SK-N-SH (cell line): ENCODE measurements at regions of chr17 and their contacts with region 1.

Region 1: GRCh38 chr17:58112970-58113631 is 29.9 kb downstream of the DYNLL2 start:
- DNase-seq: peak; percentile 79
- H3K4me3 ChIP-seq: no peak overlapping the region
- H3K27ac ChIP-seq: no peak overlapping the region
- H3K4me1 ChIP-seq: no peaks in the 10 kb centered on the region
- H3K27me3 ChIP-seq: 0 out of 2 replicates have a peak, but pooled peaks cover 18% of the 10 kb centered on the region
- CTCF ChIP-seq: peak; percentile 99
- EP300 ChIP-seq: no peak
- RAD21 ChIP-seq: peak; percentile 99

Region 2: GRCh38 chr17:57849874-57850754 is 263.0 kb before region 1 on chr17 and contains the start of gene MRPS23:
- CTCF ChIA-PET with region 1: interaction called, 118 read pairs
- POLR2A ChIA-PET with region 1: no interaction called
- DNase-seq: peak; percentile 98
- H3K4me3 ChIP-seq: peak within 1 kb of the TSS; percentile 92 to 98
- H3K27ac ChIP-seq: peak within 1 kb of the TSS; percentile 82 to 93
- H3K4me1 ChIP-seq: peaks cover 0 to 23% of the 10 kb centered on the region in 2 experiments; a peak in 3 of 4 replicates
- H3K27me3 ChIP-seq: no peaks in the 10 kb centered on the region
- CTCF ChIP-seq: no peak
- EP300 ChIP-seq: peak; percentile 35 to 53; a peak in 2 of 4 replicates
- RAD21 ChIP-seq: 0 out of 2 replicates have a peak, but pooled peaks have one; percentile 2
- polyA plus RNA-seq, gene MRPS23: 105 and 108 TPM in 2 replicates

Region 3: GRCh38 chr17:57868007-57868909 is 244.8 kb before region 1 on chr17:
- CTCF ChIA-PET with region 1: interaction called, 118 read pairs
- POLR2A ChIA-PET with region 1: no interaction called
- DNase-seq: peak; percentile 84
- H3K4me3 ChIP-seq: no peak overlapping the region
- H3K27ac ChIP-seq: peak overlapping the region; percentile 86 to 96
- H3K4me1 ChIP-seq: peaks cover 25 to 45% of the 10 kb centered on the region in 2 experiments; a peak in 3 of 4 replicates
- H3K27me3 ChIP-seq: no peaks in the 10 kb centered on the region
- CTCF ChIP-seq: peak; percentile 70
- EP300 ChIP-seq: peak; percentile 62 to 98
- RAD21 ChIP-seq: peak; percentile 40

Region 4: GRCh38 chr17:58096892-58097291 is 16.2 kb before region 1 on chr17:
- CTCF ChIA-PET with region 1: interaction called, 35 read pairs
- POLR2A ChIA-PET with region 1: no interaction called
- DNase-seq: no peak
- H3K4me3 ChIP-seq: no peak overlapping the region
- H3K27ac ChIP-seq: no peak overlapping the region
- H3K4me1 ChIP-seq: no peaks in the 10 kb centered on the region; a peak in 1 of 4 replicates
- H3K27me3 ChIP-seq: no peaks in the 10 kb centered on the region
- CTCF ChIP-seq: peak; percentile 36; the same call in 1 of the 2 replicates
- EP300 ChIP-seq: no peak
- RAD21 ChIP-seq: no peak